ENCODE measurements at regions of chr5 and their contacts with region 1.

Region 1: DNA sequence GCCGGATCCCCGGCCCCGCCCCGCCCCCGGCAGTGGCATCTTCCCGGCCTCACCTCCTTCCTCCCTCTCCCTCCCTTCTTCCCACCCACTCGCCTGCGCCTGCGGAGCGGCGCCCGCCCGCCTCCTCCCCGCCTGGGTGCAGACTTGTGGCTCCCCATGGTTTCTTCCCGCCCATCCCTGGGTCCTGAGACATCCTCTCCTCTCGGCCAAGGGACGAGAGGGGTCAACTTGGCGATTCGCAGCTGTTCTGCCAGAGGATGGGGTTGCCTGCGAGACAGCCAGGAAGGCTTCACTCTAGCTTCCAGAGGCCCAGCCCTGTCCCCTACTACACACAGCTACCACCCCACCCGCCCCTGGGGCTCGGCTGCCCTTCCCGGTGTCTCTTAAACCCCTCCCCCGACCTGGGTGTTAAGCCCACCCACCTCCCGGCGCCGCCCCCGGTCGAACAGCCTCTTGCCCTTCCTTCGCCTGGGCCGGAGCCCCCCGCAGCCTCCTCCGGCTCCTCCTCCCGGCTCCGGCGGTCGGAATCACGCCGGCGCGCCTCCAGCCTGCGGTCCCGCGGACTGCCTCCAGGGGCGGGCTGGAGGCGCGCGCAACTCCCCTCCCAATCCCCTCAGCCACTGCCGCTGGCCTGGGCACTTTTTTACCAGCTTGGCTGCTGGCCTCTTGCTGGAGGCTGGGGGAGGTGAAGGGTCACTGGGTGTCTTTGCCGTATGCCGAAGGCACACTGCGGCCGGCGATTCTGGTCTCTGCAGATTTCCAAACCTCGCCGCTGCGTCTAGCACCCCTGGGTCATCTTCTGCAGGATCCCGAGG is 1.9 kb downstream of the JADE2 start:
- DNase-seq: no peak
- ATAC-seq: peak; percentile 68
- H3K4me3 ChIP-seq: peak overlapping the region; percentile 91
- H3K27ac ChIP-seq: peak overlapping the region; percentile 68
- H3K4me1 ChIP-seq: peaks cover 7% of the 10 kb centered on the region
- H3K27me3 ChIP-seq: no peaks in the 10 kb centered on the region
- CTCF ChIP-seq: peak; percentile 79 to 87 (median 81)
- EP300 ChIP-seq: no peak
- POLR2A ChIP-seq: peak; percentile 25; the same call in 1 of the 2 replicates
- RAD21 ChIP-seq: peak; percentile 56

Region 2: GRCh38 chr5:134411546-134412266 is 115.6 kb before region 1 on chr5 and contains the start of gene CDKN2AIPNL:
- CTCF ChIA-PET with region 1: interaction called, 21 read pairs
- POLR2A ChIA-PET with region 1: interaction called, 8 read pairs
- RAD21 ChIA-PET with region 1: interaction called, 24 read pairs
- SMC1A ChIA-PET with region 1: interaction called, 7 read pairs
- in situ Hi-C with region 1: no loop called
- intact Hi-C with region 1: loop called (anchors 1 kb)
- DNase-seq: peak; percentile 34
- ATAC-seq: peak; percentile 99
- H3K4me3 ChIP-seq: peak within 1 kb of the TSS; percentile 85
- H3K27ac ChIP-seq: peak within 1 kb of the TSS; percentile 69
- H3K4me1 ChIP-seq: peaks cover 4% of the 10 kb centered on the region; the same call in 1 of the 2 replicates
- H3K27me3 ChIP-seq: no peaks in the 10 kb centered on the region
- CTCF ChIP-seq: peak; percentile 76 to 88 (median 81)
- EP300 ChIP-seq: peak in 1 of 2 experiments; percentile 46; a peak in 1 of 4 replicates
- POLR2A ChIP-seq: peak; percentile 94
- RAD21 ChIP-seq: peak; percentile 66
- polyA plus RNA-seq, gene CDKN2AIPNL: 23.5 to 29.9 TPM

Region 3: DNA sequence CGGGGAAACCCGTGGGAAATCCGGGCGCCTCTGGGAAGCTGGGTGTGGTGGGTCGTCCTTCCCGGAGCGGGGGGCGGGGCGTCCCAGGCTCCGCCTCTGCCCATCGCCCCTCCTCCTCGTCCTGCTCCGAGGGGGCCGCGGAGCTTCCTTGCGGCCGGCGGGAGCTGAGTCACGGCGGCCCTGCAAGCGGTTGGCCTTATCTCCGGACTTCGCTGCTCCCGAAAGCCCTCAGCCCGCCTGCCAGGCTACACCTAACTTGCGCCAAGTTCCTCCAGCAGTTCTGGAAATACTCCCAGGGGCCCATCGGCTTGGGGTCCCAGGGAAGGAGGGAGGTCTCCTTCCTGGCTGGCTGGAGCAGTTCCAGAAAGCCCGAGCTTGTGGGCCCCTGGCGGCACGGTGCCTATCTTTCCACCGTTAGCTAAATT is 61.5 kb before region 1 on chr5:
- CTCF ChIA-PET with region 1: interaction called, 3 read pairs
- POLR2A ChIA-PET with region 1: interaction called, 14 read pairs
- RAD21 ChIA-PET with region 1: interaction called, 10 read pairs
- SMC1A ChIA-PET with region 1: interaction called, 8 read pairs
- in situ Hi-C with region 1: no loop called
- intact Hi-C with region 1: loop called (anchors 5 kb)
- DNase-seq: peak; percentile 43
- ATAC-seq: peak; percentile 93
- H3K4me3 ChIP-seq: peak overlapping the region; percentile 99
- H3K27ac ChIP-seq: peak overlapping the region; percentile 82
- H3K4me1 ChIP-seq: peaks cover 11% of the 10 kb centered on the region
- H3K27me3 ChIP-seq: no peaks in the 10 kb centered on the region
- CTCF ChIP-seq: no peak
- EP300 ChIP-seq: no peak
- POLR2A ChIP-seq: peak; percentile 85
- RAD21 ChIP-seq: no peak

Region 4: GRCh38 chr5:134541736-134542376 is 14.5 kb after region 1 on chr5:
- CTCF ChIA-PET with region 1: interaction called, 145 read pairs
- POLR2A ChIA-PET with region 1: interaction called, 60 read pairs
- RAD21 ChIA-PET with region 1: interaction called, 144 read pairs
- SMC1A ChIA-PET with region 1: interaction called, 148 read pairs
- in situ Hi-C with region 1: no loop called
- intact Hi-C with region 1: loop called (anchors 2 kb)
- DNase-seq: no peak
- ATAC-seq: peak; percentile 23
- H3K4me3 ChIP-seq: no peak overlapping the region
- H3K27ac ChIP-seq: peak overlapping the region; percentile 91
- H3K4me1 ChIP-seq: peaks cover 63% of the 10 kb centered on the region
- H3K27me3 ChIP-seq: no peaks in the 10 kb centered on the region
- CTCF ChIP-seq: no peak
- EP300 ChIP-seq: no peak
- POLR2A ChIP-seq: no peak
- RAD21 ChIP-seq: no peak

Region 5: DNA sequence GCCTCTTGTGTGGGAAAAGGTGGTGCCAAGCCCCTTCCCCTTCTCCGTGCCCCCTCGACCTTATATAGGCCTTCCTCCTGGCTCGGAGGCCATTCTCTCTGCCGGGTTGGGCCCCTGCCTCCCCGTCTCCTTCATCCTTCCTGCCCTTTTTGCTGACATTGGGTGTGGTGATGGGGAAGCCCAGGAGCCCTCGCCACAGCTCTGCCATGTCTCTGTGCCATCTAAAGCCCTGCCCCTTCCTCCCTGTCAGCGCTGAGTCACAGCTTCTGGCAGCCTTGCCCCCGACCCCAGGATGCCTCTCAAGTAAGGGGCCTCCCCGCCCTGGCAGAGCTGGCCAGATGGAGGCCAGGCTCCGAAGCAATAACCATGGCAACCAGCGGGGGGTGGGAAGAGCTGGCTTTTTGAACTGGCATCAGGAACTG is 28.5 kb after region 1 on chr5:
- CTCF ChIA-PET with region 1: interaction called, 35 read pairs
- POLR2A ChIA-PET with region 1: interaction called, 5 read pairs
- RAD21 ChIA-PET with region 1: interaction called, 32 read pairs
- SMC1A ChIA-PET with region 1: interaction called, 16 read pairs
- in situ Hi-C with region 1: no loop called
- intact Hi-C with region 1: loop called (anchors 2 kb)
- DNase-seq: no peak
- ATAC-seq: peak; percentile 66
- H3K4me3 ChIP-seq: no peak overlapping the region
- H3K27ac ChIP-seq: peak overlapping the region; percentile 91
- H3K4me1 ChIP-seq: peaks cover 42% of the 10 kb centered on the region
- H3K27me3 ChIP-seq: no peaks in the 10 kb centered on the region
- CTCF ChIP-seq: no peak
- EP300 ChIP-seq: no peak
- POLR2A ChIP-seq: no peak
- RAD21 ChIP-seq: no peak